ENCODE measurements at regions of chr7 and their contacts with region 1.

Region 1: GRCh38 chr7:20310963-20311742 is 19.5 kb upstream of the ITGB8 start:
- DNase-seq: peak; percentile 76
- H3K4me3 ChIP-seq: no peak overlapping the region
- H3K27ac ChIP-seq: no peak overlapping the region
- H3K4me1 ChIP-seq: peaks cover 19% of the 10 kb centered on the region
- H3K27me3 ChIP-seq: no peaks in the 10 kb centered on the region
- CTCF ChIP-seq: peak; percentile 19 to 26
- POLR2A ChIP-seq: no peak

Region 2: DNA sequence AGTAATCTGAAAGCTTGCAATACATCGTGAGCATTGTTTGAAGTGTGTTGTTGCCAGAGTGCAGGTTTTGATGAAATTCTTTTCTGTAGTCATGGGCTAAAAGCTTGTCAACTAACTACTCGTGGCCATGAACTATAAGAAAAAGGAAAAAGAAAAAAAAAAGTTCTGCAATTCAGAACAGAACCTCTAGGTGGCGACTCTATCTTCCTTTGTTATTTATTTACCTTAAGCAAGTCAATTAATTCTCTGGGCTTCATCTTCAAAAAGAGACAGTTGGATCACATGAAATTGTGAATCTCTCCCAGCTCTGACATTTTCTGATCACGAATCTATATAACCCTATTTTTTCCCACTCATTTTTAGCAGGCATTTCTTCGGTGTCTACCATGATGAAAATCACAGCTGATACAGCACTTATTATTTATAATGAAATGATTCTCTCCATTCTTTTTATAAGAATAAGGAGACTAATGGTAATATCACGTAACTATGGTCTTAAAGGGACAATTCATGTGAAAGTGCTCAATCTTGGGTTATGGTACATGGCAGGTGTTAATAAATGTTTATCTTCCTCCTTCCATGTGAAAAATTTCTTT is 556.5 kb before region 1 on chr7:
- CTCF ChIA-PET with region 1: interaction called, 33 read pairs
- POLR2A ChIA-PET with region 1: no interaction called
- dilution Hi-C with region 1: no loop called
- intact Hi-C with region 1: loop called (anchors 1 kb)
- DNase-seq: peak; percentile 75
- H3K4me3 ChIP-seq: no peak overlapping the region
- H3K27ac ChIP-seq: no peak overlapping the region
- H3K4me1 ChIP-seq: no peaks in the 10 kb centered on the region
- H3K27me3 ChIP-seq: no peaks in the 10 kb centered on the region
- CTCF ChIP-seq: peak; percentile 36 to 43
- POLR2A ChIP-seq: no peak

Region 3: GRCh38 chr7:19969859-19970498 is 341.2 kb before region 1 on chr7:
- CTCF ChIA-PET with region 1: interaction called, 3 read pairs
- POLR2A ChIA-PET with region 1: no interaction called
- dilution Hi-C with region 1: no loop called
- intact Hi-C with region 1: loop called (anchors 5 kb)
- DNase-seq: peak; percentile 70
- H3K4me3 ChIP-seq: no peak overlapping the region
- H3K27ac ChIP-seq: peak overlapping the region; percentile 30
- H3K4me1 ChIP-seq: peaks cover 15% of the 10 kb centered on the region
- H3K27me3 ChIP-seq: no peaks in the 10 kb centered on the region
- CTCF ChIP-seq: no peak
- POLR2A ChIP-seq: no peak

Region 4: DNA sequence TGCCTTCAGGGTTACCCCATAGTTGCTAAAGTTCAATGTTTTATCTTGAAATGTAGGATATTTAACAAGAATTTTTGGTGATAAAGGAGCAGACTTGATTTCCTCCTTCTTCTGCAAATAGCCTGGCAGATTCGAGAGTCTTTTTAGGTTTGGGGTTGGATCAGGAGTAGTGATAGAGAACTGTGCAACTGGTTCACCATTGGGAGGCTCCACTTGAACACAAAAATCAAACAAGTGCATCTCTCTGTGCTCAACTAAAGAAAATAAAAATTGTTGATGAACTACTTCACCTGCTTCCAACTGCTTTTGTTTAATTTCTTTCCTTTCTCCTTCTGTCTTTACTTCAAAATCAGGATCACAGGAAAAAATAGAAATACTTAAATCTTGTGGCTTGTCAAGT is 152.5 kb before region 1 on chr7:
- CTCF ChIA-PET with region 1: interaction called, 21 read pairs
- POLR2A ChIA-PET with region 1: no interaction called
- dilution Hi-C with region 1: no loop called
- intact Hi-C with region 1: loop called (anchors 1 kb)
- DNase-seq: peak; percentile 39
- H3K4me3 ChIP-seq: no peak overlapping the region
- H3K27ac ChIP-seq: no peak overlapping the region
- H3K4me1 ChIP-seq: no peaks in the 10 kb centered on the region
- H3K27me3 ChIP-seq: no peaks in the 10 kb centered on the region
- CTCF ChIP-seq: peak in 1 of 2 donors; percentile 18
- POLR2A ChIP-seq: no peak

Region 5: GRCh38 chr7:20219446-20220292 is 91.5 kb before region 1 on chr7:
- CTCF ChIA-PET with region 1: interaction called, 6 read pairs
- POLR2A ChIA-PET with region 1: no interaction called
- dilution Hi-C with region 1: loop called (anchors 25 kb)
- intact Hi-C with region 1: loop called (anchors 1 kb)
- DNase-seq: peak; percentile 95
- H3K4me3 ChIP-seq: no peak overlapping the region
- H3K27ac ChIP-seq: peak overlapping the region; percentile 83
- H3K4me1 ChIP-seq: peaks cover 21% of the 10 kb centered on the region
- H3K27me3 ChIP-seq: no peaks in the 10 kb centered on the region
- CTCF ChIP-seq: no peak
- POLR2A ChIP-seq: peak; percentile 78

Region 6: GRCh38 chr7:20270867-20271266 is 40.3 kb before region 1 on chr7:
- CTCF ChIA-PET with region 1: no interaction called
- POLR2A ChIA-PET with region 1: no interaction called
- dilution Hi-C with region 1: no loop called
- intact Hi-C with region 1: no loop called
- DNase-seq: no peak
- H3K4me3 ChIP-seq: no peak overlapping the region
- H3K27ac ChIP-seq: no peak overlapping the region
- H3K4me1 ChIP-seq: no peaks in the 10 kb centered on the region
- H3K27me3 ChIP-seq: no peaks in the 10 kb centered on the region
- CTCF ChIP-seq: no peak
- POLR2A ChIP-seq: no peak

Region 7: GRCh38 chr7:20647908-20648776 is 337.0 kb after region 1 on chr7:
- CTCF ChIA-PET with region 1: interaction called, 5 read pairs
- POLR2A ChIA-PET with region 1: no interaction called
- dilution Hi-C with region 1: no loop called
- intact Hi-C with region 1: loop called (anchors 2 kb)
- DNase-seq: peak; percentile 64
- H3K4me3 ChIP-seq: no peak overlapping the region
- H3K27ac ChIP-seq: no peak overlapping the region
- H3K4me1 ChIP-seq: no peaks in the 10 kb centered on the region
- H3K27me3 ChIP-seq: peaks cover 0 to 4% of the 10 kb centered on the region in 2 experiments
- CTCF ChIP-seq: peak; percentile 54 to 64
- POLR2A ChIP-seq: no peak